Sigmoid colon (tissue), 7 donors: ENCODE measurements at regions of chr7 and their contacts with region 1.

Region 1: DNA sequence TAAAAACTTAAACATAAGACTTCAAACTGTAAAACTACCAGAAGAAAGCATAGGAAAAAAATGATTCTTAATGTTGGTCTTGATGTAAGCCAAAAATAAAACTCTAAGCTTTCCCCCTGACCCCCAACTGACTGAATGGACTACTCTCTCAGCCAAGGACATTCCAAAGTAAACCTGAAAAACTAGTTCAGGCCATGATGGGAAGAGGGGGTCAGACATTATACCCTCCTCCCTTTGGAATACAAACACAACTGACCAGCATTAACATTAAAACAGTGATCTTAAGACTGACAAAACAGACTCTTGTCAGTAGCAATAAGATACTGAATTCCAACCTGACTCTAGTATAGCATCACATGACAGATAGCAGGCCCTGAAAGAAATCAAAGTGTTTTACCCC is 13.5 kb upstream of the LRGUK start:
- DNase-seq: no peak
- H3K4me3 ChIP-seq: no peak overlapping the region
- H3K27ac ChIP-seq: no peak overlapping the region
- H3K4me1 ChIP-seq: no peaks in the 10 kb centered on the region
- H3K27me3 ChIP-seq: no peaks in the 10 kb centered on the region
- CTCF ChIP-seq: no peak
- EP300 ChIP-seq: no peak
- POLR2A ChIP-seq: no peak

Region 2: DNA sequence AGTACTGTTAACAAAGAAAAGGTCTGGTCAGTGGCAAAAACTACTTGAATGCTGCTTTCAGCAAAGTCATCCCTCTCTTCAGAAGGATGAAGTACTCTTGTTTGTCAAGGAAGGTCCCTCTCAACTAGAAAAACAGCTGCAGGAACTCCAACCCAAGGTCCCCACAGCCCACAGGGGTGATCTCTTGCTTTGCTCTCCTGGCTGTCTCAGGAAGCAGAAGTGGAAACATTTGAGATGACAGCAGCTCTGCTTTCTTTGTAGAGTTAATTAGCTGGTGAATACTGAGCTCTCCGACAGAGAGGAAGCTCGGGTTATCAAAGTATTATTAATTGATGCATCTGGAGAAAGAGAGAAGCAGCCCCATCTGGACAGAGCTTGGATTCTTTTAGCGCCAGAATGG is 11.9 kb before region 1 on chr7:
- intact Hi-C with region 1: loop called (anchors 1 kb)
- DNase-seq: no peak
- H3K4me3 ChIP-seq: no peak overlapping the region
- H3K27ac ChIP-seq: no peak overlapping the region
- H3K4me1 ChIP-seq: no peaks in the 10 kb centered on the region
- H3K27me3 ChIP-seq: no peaks in the 10 kb centered on the region
- CTCF ChIP-seq: no peak
- EP300 ChIP-seq: no peak
- POLR2A ChIP-seq: no peak

Region 3: DNA sequence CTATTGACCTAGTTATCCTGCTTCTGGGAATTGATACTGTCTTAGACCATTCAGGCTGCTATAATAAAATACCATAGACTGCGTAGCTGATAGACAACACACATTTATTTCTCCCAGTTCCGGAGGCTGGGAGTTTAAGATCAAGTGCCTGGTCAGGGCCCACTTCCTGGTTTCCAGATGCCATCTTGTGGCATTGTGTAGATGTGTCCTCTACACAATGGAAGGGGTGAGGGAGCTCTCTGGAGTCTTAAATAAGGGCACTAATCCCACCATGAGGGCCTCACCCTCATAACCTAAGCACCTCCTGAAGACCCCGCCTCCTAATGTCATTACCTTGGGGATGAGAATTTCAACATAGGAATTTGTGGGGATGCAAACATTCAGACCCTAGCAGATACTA is 140.7 kb after region 1 on chr7:
- intact Hi-C with region 1: no loop called
- DNase-seq: no peak
- H3K4me3 ChIP-seq: no peak overlapping the region
- H3K27ac ChIP-seq: no peak overlapping the region
- H3K4me1 ChIP-seq: no peaks in the 10 kb centered on the region
- H3K27me3 ChIP-seq: no peaks in the 10 kb centered on the region
- CTCF ChIP-seq: no peak
- EP300 ChIP-seq: no peak
- POLR2A ChIP-seq: no peak